Dendritic cell treated with granulocyte-macrophage colony-stimulating factor and Interleukin-4, amounts not matched to agents 40 ng/mL and 50 ng/mL, for 4 days (primary cell): ENCODE measurements at regions of chr3 and their contacts with region 1.

Region 1: GRCh38 chr3:107235928-107236315 is 141.3 kb upstream of the CCDC54 start:
- H3K4me3 Mint-ChIP-seq: peak overlapping the region; percentile 35
- H3K27ac Mint-ChIP-seq: no peak overlapping the region
- H3K4me1 Mint-ChIP-seq: peaks cover 13% of the 10 kb centered on the region
- H3K27me3 Mint-ChIP-seq: peaks cover 5% of the 10 kb centered on the region

Region 2: GRCh38 chr3:107522510-107523288 is 286.8 kb after region 1 on chr3 and contains the start of gene BBX:
- intact Hi-C with region 1: loop called (anchors 2 kb)
- H3K4me3 Mint-ChIP-seq: peak within 1 kb of the TSS; percentile 88
- H3K27ac Mint-ChIP-seq: peak within 1 kb of the TSS; percentile 91
- H3K4me1 Mint-ChIP-seq: peaks cover 21% of the 10 kb centered on the region
- H3K27me3 Mint-ChIP-seq: peaks cover 9% of the 10 kb centered on the region

Region 3: DNA sequence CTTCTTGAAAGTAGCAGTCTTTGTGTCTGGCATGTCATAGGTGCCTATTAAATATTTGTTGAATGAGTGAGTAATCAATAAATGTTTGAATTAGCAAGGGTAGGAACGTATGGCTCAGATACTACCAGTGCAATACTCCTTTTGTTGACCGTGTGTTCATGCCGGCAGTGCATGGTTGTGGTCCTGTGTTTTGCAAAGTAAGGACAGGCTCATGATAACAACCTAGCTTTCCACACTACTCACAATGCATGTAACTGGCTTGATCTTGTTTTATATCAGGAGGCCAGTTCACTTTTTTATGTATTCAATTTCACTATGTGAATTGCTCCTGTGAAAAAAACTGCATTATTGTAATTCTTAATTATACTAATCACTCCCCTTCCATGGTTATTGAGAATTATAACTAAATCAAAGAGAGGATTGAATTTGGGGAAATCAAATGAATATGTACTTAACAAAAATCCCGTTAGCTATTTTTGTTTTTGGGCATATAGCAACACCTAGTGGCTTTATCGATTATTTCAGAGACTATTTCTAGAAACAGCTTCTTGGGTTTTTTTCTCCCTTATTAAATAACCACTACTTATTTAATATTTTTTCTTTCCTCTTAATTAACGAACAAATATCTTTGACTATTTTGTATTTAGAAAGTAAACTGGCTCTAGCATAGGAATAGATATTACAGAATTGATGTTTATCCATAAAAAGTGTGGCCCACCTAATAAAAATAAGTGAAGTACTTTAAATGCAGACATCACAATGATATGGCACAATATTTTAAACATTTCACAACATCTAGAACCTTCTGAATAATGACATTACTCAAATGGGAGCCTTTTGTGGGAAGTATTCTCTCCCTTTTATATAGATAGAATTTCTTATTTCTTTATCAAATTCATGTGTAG is 505.3 kb after region 1 on chr3:
- intact Hi-C with region 1: loop called (anchors 5 kb)
- H3K4me3 Mint-ChIP-seq: no peak overlapping the region
- H3K27ac Mint-ChIP-seq: no peak overlapping the region
- H3K4me1 Mint-ChIP-seq: peaks cover 11% of the 10 kb centered on the region
- H3K27me3 Mint-ChIP-seq: no peaks in the 10 kb centered on the region

Region 4: DNA sequence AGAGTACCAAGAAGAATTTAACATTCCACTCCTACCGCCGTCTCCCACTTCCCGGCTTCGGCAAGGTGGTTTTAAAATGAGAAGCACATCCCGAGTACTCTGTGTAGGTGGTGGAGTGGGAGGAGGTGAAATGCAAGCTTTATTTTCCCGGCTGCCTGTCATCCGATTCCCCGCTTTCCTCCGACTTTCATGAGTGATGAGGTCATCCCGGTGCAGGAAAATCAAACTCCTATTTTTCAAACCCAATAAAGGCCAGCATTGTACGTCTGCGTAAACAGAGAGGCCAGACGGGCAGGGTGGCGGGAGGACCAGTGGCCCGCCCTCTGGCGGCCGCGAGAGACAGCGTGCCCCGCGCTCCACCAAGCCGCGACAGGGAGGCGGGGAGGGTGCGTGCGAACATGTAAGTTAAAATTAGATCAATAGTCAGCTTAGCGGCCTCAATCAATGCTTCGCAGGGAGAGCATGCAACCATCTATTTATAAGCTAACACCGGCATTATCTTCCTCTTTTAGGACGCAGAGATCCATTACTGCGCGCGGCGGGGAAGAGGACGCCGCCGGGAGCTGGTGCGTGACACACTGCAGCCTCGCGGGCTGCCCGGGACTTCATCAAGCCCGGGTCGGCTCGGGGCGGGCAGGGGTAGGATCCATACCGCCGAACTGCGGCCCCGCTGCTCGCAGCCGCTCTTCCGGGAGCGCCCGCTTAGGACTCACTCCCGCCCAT is 691.6 kb after region 1 on chr3:
- intact Hi-C with region 1: loop called (anchors 10 kb)
- H3K4me3 Mint-ChIP-seq: peak overlapping the region; percentile 81
- H3K27ac Mint-ChIP-seq: peak overlapping the region; percentile 81
- H3K4me1 Mint-ChIP-seq: peaks cover 16% of the 10 kb centered on the region
- H3K27me3 Mint-ChIP-seq: peaks cover 12% of the 10 kb centered on the region